ENCODE measurements at regions of chr4 and their contacts with region 1.

Region 1: GRCh38 chr4:85147439-85148076 is 181.1 kb upstream of the WDFY3 start:
- DNase-seq: no peak
- H3K4me3 ChIP-seq: no peak overlapping the region
- H3K27ac ChIP-seq: no peak overlapping the region
- H3K4me1 ChIP-seq: no peaks in the 10 kb centered on the region
- H3K27me3 ChIP-seq: no peaks in the 10 kb centered on the region
- CTCF ChIP-seq: peak; percentile 47 to 67 (median 54)
- POLR2A ChIP-seq: no peak

Region 2: GRCh38 chr4:85127653-85128052 is 19.9 kb before region 1 on chr4:
- intact Hi-C with region 1: no loop called
- DNase-seq: no peak
- H3K4me3 ChIP-seq: no peak overlapping the region
- H3K27ac ChIP-seq: no peak overlapping the region
- H3K4me1 ChIP-seq: no peaks in the 10 kb centered on the region
- H3K27me3 ChIP-seq: no peaks in the 10 kb centered on the region
- CTCF ChIP-seq: no peak
- POLR2A ChIP-seq: no peak

Region 3: DNA sequence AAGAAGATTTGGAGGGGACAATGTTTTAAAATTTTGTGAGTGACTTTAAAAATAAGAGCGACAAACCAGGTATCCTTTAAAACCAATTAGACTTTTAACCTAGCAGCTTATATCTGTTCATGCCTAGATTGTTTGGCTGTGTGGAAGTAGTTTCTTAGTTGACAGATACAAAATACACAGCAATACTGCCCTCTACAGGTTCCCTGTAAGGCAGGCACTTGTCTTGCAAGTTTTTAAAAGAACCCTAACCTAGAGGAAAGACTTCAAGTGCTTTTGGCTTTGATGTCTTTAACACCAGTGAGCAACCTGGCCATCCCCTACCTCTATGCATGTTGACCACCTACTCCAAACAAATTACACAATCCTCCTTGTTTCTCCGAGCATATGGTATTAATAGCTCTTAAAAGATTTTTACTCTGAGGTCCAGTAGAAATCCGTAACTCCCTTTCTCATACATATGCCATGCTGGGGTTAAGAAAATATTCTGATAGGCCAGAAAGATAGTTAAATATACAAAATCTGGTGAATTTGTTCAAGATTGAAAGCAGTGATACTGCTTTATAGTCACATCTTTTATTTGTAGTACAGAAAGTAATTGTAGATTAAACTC is 600.4 kb after region 1 on chr4:
- intact Hi-C with region 1: loop called (anchors 10 kb)
- DNase-seq: no peak
- H3K4me3 ChIP-seq: no peak overlapping the region
- H3K27ac ChIP-seq: no peak overlapping the region
- H3K4me1 ChIP-seq: peaks cover 20% of the 10 kb centered on the region
- H3K27me3 ChIP-seq: no peaks in the 10 kb centered on the region
- CTCF ChIP-seq: peak; percentile 48 to 74 (median 64)
- POLR2A ChIP-seq: no peak